ENCODE measurements at regions of chr6 and their contacts with region 1.

Region 1: DNA sequence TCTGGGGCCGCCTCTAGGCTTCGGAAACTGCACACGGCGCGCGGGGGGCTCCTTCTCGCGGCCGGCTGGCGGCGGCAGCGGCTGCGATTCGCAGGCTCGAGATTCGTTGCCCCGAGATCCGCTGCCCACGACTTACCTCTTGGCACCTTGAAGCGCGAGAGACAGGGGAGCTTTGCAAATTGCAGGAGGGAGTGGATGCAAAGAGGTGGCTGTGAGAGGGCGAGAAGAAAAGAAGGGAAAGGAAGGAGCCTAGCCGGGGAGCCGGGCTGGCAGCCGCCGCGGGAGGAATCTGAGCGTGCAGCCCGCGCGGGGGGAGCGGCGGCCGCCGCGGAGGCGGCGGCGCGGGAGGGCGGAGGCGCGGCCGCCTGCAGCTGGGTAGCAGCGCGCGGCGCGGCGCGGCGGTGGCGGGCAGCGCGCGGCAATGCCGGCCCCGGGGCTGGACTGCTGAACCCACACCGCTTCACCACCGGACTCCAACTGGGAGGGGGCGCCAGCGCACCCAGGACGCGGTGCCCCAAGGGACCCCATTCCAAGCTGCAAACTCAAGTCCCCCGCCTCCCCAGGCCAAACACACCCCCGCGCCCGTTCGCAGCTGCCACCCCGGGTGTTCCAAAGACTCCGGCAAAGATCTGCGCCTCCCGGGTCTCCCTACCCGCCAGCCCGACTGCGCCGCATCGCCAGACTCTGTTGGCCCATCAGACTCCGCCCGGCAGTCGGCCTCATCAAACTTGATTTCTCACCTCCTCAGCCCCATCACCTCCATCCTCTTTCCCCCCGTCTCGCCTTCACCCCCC is 44.2 kb upstream of the SUPT3H start:
- DNase-seq: peak in 2 of 3 donors; percentile 45 to 47
- H3K4me3 ChIP-seq: peak overlapping the region; percentile 83 to 98 (median 97)
- H3K4me3 Mint-ChIP-seq: peak overlapping the region; percentile 99 to 100
- H3K27ac ChIP-seq: peak overlapping the region; percentile 59 to 88
- H3K27ac Mint-ChIP-seq: peak overlapping the region; percentile 74 to 92 (median 88)
- H3K4me1 ChIP-seq: peaks cover 29 to 45% of the 10 kb centered on the region in 2 donors
- H3K4me1 Mint-ChIP-seq: peaks cover 40% of the 10 kb centered on the region
- H3K27me3 ChIP-seq: peaks cover 0 to 12% of the 10 kb centered on the region in 2 donors
- H3K27me3 Mint-ChIP-seq: peaks cover 9 to 20% (median 17%) of the 10 kb centered on the region in 3 donors
- CTCF ChIP-seq: no peak

Region 2: DNA sequence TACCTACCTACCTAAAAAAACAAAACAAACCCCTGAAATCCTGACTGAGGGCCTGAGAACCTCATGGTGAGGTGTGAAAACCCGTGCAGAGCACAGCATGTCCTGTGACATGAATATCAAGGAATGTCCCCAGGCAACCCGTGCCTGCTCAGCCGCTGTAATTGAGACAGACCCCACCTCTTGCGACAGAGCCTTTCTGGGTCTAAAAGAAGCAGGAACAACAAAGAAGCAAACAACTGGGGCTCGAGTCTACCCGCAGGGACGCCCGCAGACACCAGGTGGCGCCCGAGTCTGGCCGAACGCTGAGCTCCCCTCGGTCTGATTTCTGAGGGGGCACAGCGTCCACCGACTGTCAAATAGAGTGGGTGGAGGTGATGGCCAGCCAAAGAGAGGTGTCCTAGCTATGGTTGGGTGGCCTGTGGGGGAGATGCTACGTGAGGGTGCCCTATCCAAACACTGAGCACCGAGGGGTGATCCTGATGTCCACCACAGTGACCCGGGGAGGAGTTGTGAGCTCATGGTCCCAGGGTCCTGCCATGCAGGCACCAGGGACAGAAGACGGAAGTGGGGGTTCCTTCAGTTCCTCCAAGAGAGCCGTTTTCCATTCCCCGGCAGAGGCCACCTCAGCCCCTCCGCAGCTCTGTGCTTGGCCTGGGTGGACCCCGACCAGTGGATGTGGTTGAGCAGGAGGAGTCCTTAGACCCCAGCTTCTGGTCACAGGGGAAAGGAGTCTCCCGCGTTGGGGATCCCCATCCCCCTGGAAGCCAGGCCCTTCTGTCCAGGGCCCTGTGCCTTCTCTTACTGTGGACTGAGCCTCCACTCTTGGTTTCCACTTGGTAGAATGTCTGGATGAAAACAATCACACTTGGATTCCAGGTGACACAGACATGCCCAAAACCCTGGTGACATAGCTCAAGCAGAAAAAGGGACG is 766.2 kb before region 1 on chr6:
- intact Hi-C with region 1: loop called in 1 of 2 experiments (anchors 10 kb)
- DNase-seq: peak; percentile 80 to 96 (median 81)
- H3K4me3 ChIP-seq: no peak overlapping the region
- H3K4me3 Mint-ChIP-seq: peak overlapping the region in 1 of 2 donors; percentile 77
- H3K27ac ChIP-seq: no peak overlapping the region
- H3K27ac Mint-ChIP-seq: peak overlapping the region; percentile 6 to 86 (median 77)
- H3K4me1 ChIP-seq: peaks cover 20% of the 10 kb centered on the region in 2 donors
- H3K4me1 Mint-ChIP-seq: peaks cover 20% of the 10 kb centered on the region
- H3K27me3 ChIP-seq: peaks cover 0 to 8% of the 10 kb centered on the region in 2 donors
- H3K27me3 Mint-ChIP-seq: peaks cover 9 to 18% (median 14%) of the 10 kb centered on the region in 3 donors
- CTCF ChIP-seq: peak; percentile 92

Region 3: GRCh38 chr6:45436544-45437438 is 14.9 kb after region 1 on chr6:
- intact Hi-C with region 1: loop called in 1 of 2 experiments (anchors 2 kb)
- DNase-seq: peak; percentile 64 to 86 (median 76)
- H3K4me3 ChIP-seq: peak overlapping the region; percentile 10 to 62 (median 36)
- H3K4me3 Mint-ChIP-seq: peak overlapping the region; percentile 44 to 54
- H3K27ac ChIP-seq: peak overlapping the region in 1 of 2 donors; percentile 78
- H3K27ac Mint-ChIP-seq: peak overlapping the region; percentile 78 to 94 (median 88)
- H3K4me1 ChIP-seq: peaks cover 52 to 65% of the 10 kb centered on the region in 2 donors
- H3K4me1 Mint-ChIP-seq: peaks cover 70% of the 10 kb centered on the region
- H3K27me3 ChIP-seq: no peaks in the 10 kb centered on the region
- H3K27me3 Mint-ChIP-seq: no peaks in the 10 kb centered on the region
- CTCF ChIP-seq: no peak

Region 4: DNA sequence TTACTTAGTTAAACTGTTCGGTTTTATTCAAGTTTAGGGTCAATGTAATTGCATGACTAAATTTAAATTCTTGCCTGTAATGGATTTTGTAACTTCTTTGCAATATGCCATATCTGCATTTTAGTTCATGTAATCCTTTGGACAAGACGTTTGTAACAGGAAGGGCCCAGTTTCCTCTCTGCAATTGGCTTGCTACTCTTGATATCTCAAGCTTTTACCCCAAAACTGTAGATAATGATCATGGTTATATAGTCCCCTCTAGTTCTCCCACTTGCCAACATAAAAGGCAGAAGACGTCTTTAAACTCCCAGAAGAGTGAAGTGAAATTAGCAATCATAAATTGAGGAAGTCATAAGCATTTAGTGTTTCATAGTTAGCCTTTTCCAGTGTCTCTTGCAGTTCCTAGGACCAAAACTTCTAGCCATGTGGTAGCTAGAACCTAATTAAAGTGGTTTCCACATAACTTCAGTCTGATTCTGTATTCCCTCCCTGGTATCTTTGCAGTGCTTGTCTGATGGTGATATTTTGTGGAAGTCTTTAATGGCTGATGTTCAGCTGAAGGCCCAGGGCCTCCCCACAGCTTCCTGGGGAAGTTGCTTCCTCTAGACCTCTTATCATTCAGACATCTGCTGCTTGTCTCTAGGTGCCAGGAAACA is 73.7 kb after region 1 on chr6:
- intact Hi-C with region 1: loop called in 1 of 2 experiments (anchors 5 kb)
- DNase-seq: peak; percentile 39 to 68 (median 46)
- H3K4me3 ChIP-seq: peak overlapping the region in 1 of 3 experiments; percentile 39
- H3K4me3 Mint-ChIP-seq: peak overlapping the region; percentile 4 to 78
- H3K27ac ChIP-seq: peak overlapping the region; percentile 17 to 70
- H3K27ac Mint-ChIP-seq: peak overlapping the region; percentile 84 to 92 (median 88)
- H3K4me1 ChIP-seq: peaks cover 31 to 33% of the 10 kb centered on the region in 2 donors
- H3K4me1 Mint-ChIP-seq: peaks cover 38% of the 10 kb centered on the region
- H3K27me3 ChIP-seq: no peaks in the 10 kb centered on the region
- H3K27me3 Mint-ChIP-seq: peaks cover 0 to 2% (median 0%) of the 10 kb centered on the region in 3 donors
- CTCF ChIP-seq: no peak

Region 5: DNA sequence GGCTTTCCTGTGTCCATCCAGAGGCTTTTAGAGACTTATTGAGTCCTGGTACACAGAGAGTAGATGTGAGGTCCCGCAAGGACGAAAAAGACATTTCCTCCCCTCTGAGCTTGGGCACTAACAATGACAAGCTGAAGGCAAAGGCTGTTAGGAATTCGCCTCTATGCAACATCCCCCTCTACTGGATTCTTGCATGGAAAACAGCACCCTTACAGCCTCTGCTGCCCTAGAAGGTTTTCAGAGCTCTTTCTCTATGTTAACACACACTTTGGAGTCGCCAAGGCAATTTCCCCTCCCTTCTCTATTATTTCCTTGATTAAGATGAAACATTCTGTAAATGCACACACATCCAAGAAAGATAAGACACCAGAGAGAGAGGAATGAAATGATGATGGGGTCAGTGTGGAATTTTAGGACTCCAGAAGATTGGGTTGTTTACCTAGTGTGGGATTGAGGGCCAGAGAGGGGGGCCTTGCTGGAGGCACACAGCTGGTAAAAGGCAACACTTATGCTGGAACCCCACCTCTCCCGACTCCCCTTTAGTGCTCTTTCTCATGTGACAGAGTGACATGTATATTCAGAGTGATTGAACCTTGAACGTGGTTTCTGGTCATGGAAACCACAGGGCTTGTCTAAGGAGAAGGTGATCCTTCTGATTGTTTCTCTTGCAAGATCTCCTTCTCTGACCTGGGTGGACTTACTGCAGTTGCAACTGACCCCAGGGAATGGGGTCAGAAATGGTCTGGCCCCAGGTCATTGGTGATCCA is 293.0 kb after region 1 on chr6:
- intact Hi-C with region 1: loop called in 1 of 2 experiments (anchors 5 kb)
- DNase-seq: peak; percentile 50 to 79 (median 70)
- H3K4me3 ChIP-seq: no peak overlapping the region
- H3K4me3 Mint-ChIP-seq: no peak overlapping the region
- H3K27ac ChIP-seq: no peak overlapping the region
- H3K27ac Mint-ChIP-seq: peak overlapping the region in 3 of 7 donors; percentile 66 to 82 (median 69)
- H3K4me1 ChIP-seq: peaks cover 23 to 29% of the 10 kb centered on the region in 2 donors
- H3K4me1 Mint-ChIP-seq: peaks cover 37% of the 10 kb centered on the region
- H3K27me3 ChIP-seq: no peaks in the 10 kb centered on the region
- H3K27me3 Mint-ChIP-seq: peaks cover 0 to 7% (median 0%) of the 10 kb centered on the region in 3 donors
- CTCF ChIP-seq: peak; percentile 78

Measured in CD14-positive monocyte (primary cell).